ENCODE measurements at regions of chr4 and their contacts with region 1.

Region 1: DNA sequence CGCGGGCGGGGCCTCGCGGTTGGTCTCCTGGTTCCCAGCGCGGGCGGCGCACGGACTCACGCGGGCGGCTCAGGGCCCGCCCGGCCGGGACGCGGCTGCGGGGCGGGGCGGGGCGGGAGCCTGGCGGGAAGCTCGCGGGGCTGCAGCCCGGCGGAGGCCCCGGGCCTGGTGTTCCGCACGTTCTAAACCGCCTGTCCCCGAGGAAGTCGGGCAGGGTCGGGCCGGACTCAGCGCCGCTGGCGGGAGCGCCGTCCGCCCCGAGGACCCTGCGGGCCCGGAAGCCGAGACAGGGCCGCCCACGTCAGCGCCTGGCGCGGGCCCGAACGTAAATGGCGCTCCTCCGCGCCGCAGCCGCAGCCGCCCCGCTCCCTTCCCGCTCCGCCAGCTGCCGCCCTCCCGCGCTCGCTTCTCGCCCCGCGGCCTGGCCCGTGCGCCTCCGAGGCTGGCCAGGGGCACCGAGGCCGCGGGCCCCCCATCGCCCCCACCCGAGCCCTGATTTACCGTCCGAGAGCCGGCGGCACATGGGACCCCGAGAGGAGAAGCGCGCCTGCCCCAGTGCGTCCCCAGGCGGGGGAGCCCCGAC is 309 bp upstream of the CTBP1 start:
- DNase-seq: peak; percentile 75 to 83 (median 82)
- H3K4me3 ChIP-seq: peak overlapping the region; percentile 62 to 81 (median 79)
- H3K4me3 Mint-ChIP-seq: peak overlapping the region; percentile 83 to 88
- H3K27ac ChIP-seq: peak overlapping the region; percentile 81 to 88
- H3K27ac Mint-ChIP-seq: peak overlapping the region; percentile 76 to 93 (median 89)
- H3K4me1 ChIP-seq: peaks cover 31 to 40% of the 10 kb centered on the region in 2 donors
- H3K4me1 Mint-ChIP-seq: peaks cover 40% of the 10 kb centered on the region
- H3K27me3 ChIP-seq: no peaks in the 10 kb centered on the region
- H3K27me3 Mint-ChIP-seq: peaks cover 0 to 6% (median 0%) of the 10 kb centered on the region in 3 donors
- CTCF ChIP-seq: no peak

Region 2: GRCh38 chr4:1183985-1184773 is 65.1 kb before region 1 on chr4:
- intact Hi-C with region 1: loop called in 1 of 2 experiments (anchors 5 kb)
- DNase-seq: peak; percentile 55 to 69 (median 60)
- H3K4me3 ChIP-seq: peak overlapping the region; percentile 11 to 66 (median 38)
- H3K4me3 Mint-ChIP-seq: peak overlapping the region; percentile 69 to 72
- H3K27ac ChIP-seq: peak overlapping the region; percentile 57 to 81
- H3K27ac Mint-ChIP-seq: peak overlapping the region; percentile 84 to 92 (median 90)
- H3K4me1 ChIP-seq: peaks cover 19 to 41% of the 10 kb centered on the region in 2 donors
- H3K4me1 Mint-ChIP-seq: peaks cover 42% of the 10 kb centered on the region
- H3K27me3 ChIP-seq: no peaks in the 10 kb centered on the region
- H3K27me3 Mint-ChIP-seq: peaks cover 0 to 3% (median 2%) of the 10 kb centered on the region in 3 donors
- CTCF ChIP-seq: no peak

Region 3: GRCh38 chr4:1870578-1871443 is 621.6 kb after region 1 on chr4 and contains the start of gene NSD2:
- intact Hi-C with region 1: loop called (anchors 5 kb)
- DNase-seq: peak; percentile 83 to 91 (median 87)
- H3K4me3 ChIP-seq: peak within 1 kb of the TSS; percentile 59 to 87 (median 82)
- H3K4me3 Mint-ChIP-seq: peak within 1 kb of the TSS; percentile 87 to 90
- H3K27ac ChIP-seq: peak within 1 kb of the TSS; percentile 68 to 91
- H3K27ac Mint-ChIP-seq: peak within 1 kb of the TSS; percentile 67 to 93 (median 87)
- H3K4me1 ChIP-seq: peaks cover 19 to 30% of the 10 kb centered on the region in 2 donors
- H3K4me1 Mint-ChIP-seq: peaks cover 27% of the 10 kb centered on the region
- H3K27me3 ChIP-seq: no peaks in the 10 kb centered on the region
- H3K27me3 Mint-ChIP-seq: peaks cover 7 to 14% (median 7%) of the 10 kb centered on the region in 3 donors
- CTCF ChIP-seq: no peak
- polyA plus RNA-seq, gene NSD2: 1.9 to 8.7 (median 2.3) TPM